ENCODE measurements at regions of chr5 and their contacts with region 1.

Region 1: GRCh38 chr5:74766849-74767578 is at the starts of genes GFM2 and NSA2:
- DNase-seq: peak; percentile 77 to 94 (median 92)
- ATAC-seq: peak; percentile 97
- H3K4me3 ChIP-seq: peak within 1 kb of the TSS; percentile 98
- H3K4me3 Mint-ChIP-seq: peak within 1 kb of the TSS; percentile 97 to 100 (median 99)
- H3K27ac ChIP-seq: peak within 1 kb of the TSS; percentile 81
- H3K27ac Mint-ChIP-seq: peak within 1 kb of the TSS; percentile 95 to 99 (median 98)
- H3K4me1 ChIP-seq: peaks cover 22% of the 10 kb centered on the region in 2 donors
- H3K4me1 Mint-ChIP-seq: peaks cover 12 to 57% (median 40%) of the 10 kb centered on the region in 7 donors
- H3K27me3 ChIP-seq: no peaks in the 10 kb centered on the region
- H3K27me3 Mint-ChIP-seq: no peaks in the 10 kb centered on the region
- total RNA-seq, gene GFM2: 17.8 to 30.2 (median 20.5) TPM
- total RNA-seq, gene NSA2: 70.9 to 153 (median 126) TPM

Region 2: GRCh38 chr5:74576941-74577456 is 190.0 kb before region 1 on chr5:
- CTCF ChIA-PET with region 1: no interaction called
- POLR2A ChIA-PET with region 1: no interaction called
- intact Hi-C with region 1: loop called in 1 of 2 experiments (anchors 5 kb)
- DNase-seq: peak in 7 of 9 donors; percentile 6 to 43 (median 24)
- ATAC-seq: peak; percentile 41
- H3K4me3 ChIP-seq: peak overlapping the region; percentile 48
- H3K4me3 Mint-ChIP-seq: peak overlapping the region; percentile 41 to 92 (median 71)
- H3K27ac ChIP-seq: peak overlapping the region; percentile 8
- H3K27ac Mint-ChIP-seq: peak overlapping the region; percentile 51 to 97 (median 81)
- H3K4me1 ChIP-seq: peaks cover 21 to 22% of the 10 kb centered on the region in 2 donors
- H3K4me1 Mint-ChIP-seq: peaks cover 10 to 51% (median 30%) of the 10 kb centered on the region in 7 donors
- H3K27me3 ChIP-seq: no peaks in the 10 kb centered on the region
- H3K27me3 Mint-ChIP-seq: peaks cover 0 to 12% (median 0%) of the 10 kb centered on the region in 5 donors

Region 3: GRCh38 chr5:74853256-74853655 is 86.2 kb after region 1 on chr5:
- CTCF ChIA-PET with region 1: no interaction called
- POLR2A ChIA-PET with region 1: no interaction called
- intact Hi-C with region 1: no loop called
- DNase-seq: no peak
- ATAC-seq: no peak
- H3K4me3 ChIP-seq: no peak overlapping the region
- H3K4me3 Mint-ChIP-seq: peak overlapping the region in 1 of 10 donors; percentile 38
- H3K27ac ChIP-seq: no peak overlapping the region
- H3K27ac Mint-ChIP-seq: peak overlapping the region in 2 of 9 donors; percentile 19 to 38
- H3K4me1 ChIP-seq: peaks cover 0 to 12% of the 10 kb centered on the region in 2 donors
- H3K4me1 Mint-ChIP-seq: peaks cover 19 to 68% (median 63%) of the 10 kb centered on the region in 7 donors
- H3K27me3 ChIP-seq: no peaks in the 10 kb centered on the region
- H3K27me3 Mint-ChIP-seq: no peaks in the 10 kb centered on the region

Region 4: GRCh38 chr5:74865804-74866595 is 99.0 kb after region 1 on chr5 and contains the start of gene FAM169A:
- CTCF ChIA-PET with region 1: interaction called, 3 read pairs
- POLR2A ChIA-PET with region 1: no interaction called
- intact Hi-C with region 1: loop called (anchors 1 kb)
- DNase-seq: peak; percentile 40 to 71 (median 61)
- ATAC-seq: peak; percentile 81
- H3K4me3 ChIP-seq: peak within 1 kb of the TSS; percentile 69
- H3K4me3 Mint-ChIP-seq: peak within 1 kb of the TSS; percentile 87 to 99 (median 97)
- H3K27ac ChIP-seq: peak within 1 kb of the TSS; percentile 78
- H3K27ac Mint-ChIP-seq: peak within 1 kb of the TSS; percentile 79 to 97 (median 95)
- H3K4me1 ChIP-seq: peaks cover 4 to 8% of the 10 kb centered on the region in 2 donors
- H3K4me1 Mint-ChIP-seq: peaks cover 7 to 49% (median 42%) of the 10 kb centered on the region in 7 donors
- H3K27me3 ChIP-seq: no peaks in the 10 kb centered on the region
- H3K27me3 Mint-ChIP-seq: peaks cover 0 to 26% (median 0%) of the 10 kb centered on the region in 5 donors
- total RNA-seq, gene FAM169A: 2.3 to 22.4 (median 15.6) TPM

Region 5: GRCh38 chr5:74919487-74919886 is 152.5 kb after region 1 on chr5:
- CTCF ChIA-PET with region 1: interaction called, 4 read pairs
- POLR2A ChIA-PET with region 1: no interaction called
- intact Hi-C with region 1: loop called (anchors 1 kb)
- DNase-seq: peak in 7 of 9 donors; percentile 12 to 54 (median 29)
- ATAC-seq: peak; percentile 80
- H3K4me3 ChIP-seq: no peak overlapping the region
- H3K4me3 Mint-ChIP-seq: no peak overlapping the region
- H3K27ac ChIP-seq: no peak overlapping the region
- H3K27ac Mint-ChIP-seq: no peak overlapping the region
- H3K4me1 ChIP-seq: no peaks in the 10 kb centered on the region
- H3K4me1 Mint-ChIP-seq: no peaks in the 10 kb centered on the region
- H3K27me3 ChIP-seq: no peaks in the 10 kb centered on the region
- H3K27me3 Mint-ChIP-seq: peaks cover 0 to 6% (median 4%) of the 10 kb centered on the region in 5 donors

Region 6: GRCh38 chr5:75265731-75266130 is 498.7 kb after region 1 on chr5:
- CTCF ChIA-PET with region 1: no interaction called
- POLR2A ChIA-PET with region 1: no interaction called
- intact Hi-C with region 1: loop called (anchors 1 kb)
- DNase-seq: peak in 7 of 9 donors; percentile 27 to 65 (median 55)
- ATAC-seq: peak; percentile 75
- H3K4me3 ChIP-seq: no peak overlapping the region
- H3K4me3 Mint-ChIP-seq: no peak overlapping the region
- H3K27ac ChIP-seq: no peak overlapping the region
- H3K27ac Mint-ChIP-seq: peak overlapping the region in 1 of 9 donors; percentile 56
- H3K4me1 ChIP-seq: no peaks in the 10 kb centered on the region
- H3K4me1 Mint-ChIP-seq: peaks cover 0 to 5% (median 0%) of the 10 kb centered on the region in 7 donors
- H3K27me3 ChIP-seq: no peaks in the 10 kb centered on the region
- H3K27me3 Mint-ChIP-seq: peaks cover 0 to 11% (median 4%) of the 10 kb centered on the region in 5 donors

Region 7: DNA sequence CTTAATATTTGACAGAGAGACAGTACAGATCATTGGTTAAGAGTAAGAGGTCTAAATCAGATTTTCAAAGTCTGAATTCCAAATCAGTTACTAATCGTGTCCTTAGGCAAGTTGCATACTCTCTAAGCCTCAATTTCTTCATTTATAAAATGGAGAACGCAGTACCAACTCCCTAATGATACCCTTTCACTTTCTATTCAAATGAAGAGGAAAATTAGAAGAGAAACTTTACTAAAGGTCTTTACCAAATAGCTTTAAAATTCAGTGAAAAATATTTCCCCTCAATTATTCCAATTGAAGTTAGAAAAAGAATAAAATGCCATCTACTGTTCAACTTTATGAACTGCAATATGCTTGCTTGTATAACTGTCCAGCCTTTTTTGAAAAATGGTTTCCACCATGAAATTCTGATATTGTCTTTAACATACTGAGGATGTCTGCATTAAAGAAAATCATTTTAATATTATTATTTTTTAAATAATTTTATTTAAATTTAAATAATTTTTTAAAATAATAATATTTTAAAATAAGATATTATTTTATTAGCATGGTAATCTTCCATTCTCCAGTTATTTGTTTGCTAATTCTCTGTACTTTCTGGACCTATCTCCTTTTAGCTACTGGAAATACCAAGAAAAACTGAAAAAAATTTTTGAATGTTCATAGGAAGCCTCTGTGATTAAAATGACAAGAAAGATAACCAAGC is 914.3 kb after region 1 on chr5:
- CTCF ChIA-PET with region 1: no interaction called
- POLR2A ChIA-PET with region 1: no interaction called
- intact Hi-C with region 1: loop called in 1 of 2 experiments (anchors 5 kb)
- DNase-seq: peak in 4 of 9 donors; percentile 24 to 46 (median 38)
- ATAC-seq: peak; percentile 66
- H3K4me3 ChIP-seq: no peak overlapping the region
- H3K4me3 Mint-ChIP-seq: no peak overlapping the region
- H3K27ac ChIP-seq: no peak overlapping the region
- H3K27ac Mint-ChIP-seq: no peak overlapping the region
- H3K4me1 ChIP-seq: peaks cover 0 to 3% of the 10 kb centered on the region in 2 donors
- H3K4me1 Mint-ChIP-seq: peaks cover 7 to 27% (median 18%) of the 10 kb centered on the region in 7 donors
- H3K27me3 ChIP-seq: no peaks in the 10 kb centered on the region
- H3K27me3 Mint-ChIP-seq: no peaks in the 10 kb centered on the region